ENCODE measurements at regions of chr1 and their contacts with region 1.

Region 1: GRCh38 chr1:93846211-93846991 is 32.6 kb downstream of the DNTTIP2 start:
- DNase-seq: peak; percentile 82 to 85
- H3K4me3 ChIP-seq: peak overlapping the region; percentile 84
- H3K4me3 Mint-ChIP-seq: peak overlapping the region; percentile 81
- H3K27ac Mint-ChIP-seq: peak overlapping the region; percentile 88
- H3K4me1 ChIP-seq: peaks cover 6% of the 10 kb centered on the region
- H3K4me1 Mint-ChIP-seq: no peaks in the 10 kb centered on the region
- H3K27me3 ChIP-seq: no peaks in the 10 kb centered on the region
- H3K27me3 Mint-ChIP-seq: no peaks in the 10 kb centered on the region
- CTCF ChIP-seq: peak in 1 of 2 experiments; percentile 35

Region 2: DNA sequence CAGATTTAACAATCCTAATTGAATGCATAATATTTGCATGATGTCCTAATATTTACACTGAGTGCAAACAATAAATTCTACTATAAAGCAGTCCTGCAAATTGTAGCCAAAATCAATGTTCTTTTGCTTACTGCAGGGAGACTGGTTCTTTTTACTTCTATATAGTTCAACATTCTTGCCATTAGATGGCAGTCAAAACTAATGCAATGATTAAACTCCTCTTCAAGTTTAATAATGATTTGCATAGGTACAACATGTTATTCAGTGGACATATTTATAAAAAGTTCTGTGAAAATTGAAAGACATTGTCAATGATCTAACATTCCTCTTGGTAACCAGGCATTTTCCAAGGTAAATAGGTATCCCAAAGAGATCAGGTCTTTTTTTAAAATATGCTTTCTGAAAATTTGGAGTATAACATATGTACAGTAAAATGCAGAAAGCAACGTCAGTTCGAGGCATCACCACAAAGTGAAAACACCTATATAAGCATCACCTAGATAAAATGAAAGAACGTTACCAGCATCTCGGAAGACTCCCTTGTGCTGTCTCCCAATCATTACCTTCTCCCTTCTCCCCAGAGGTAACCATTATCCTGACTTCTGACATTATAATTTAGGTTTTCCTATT is 408.3 kb before region 1 on chr1:
- CTCF ChIA-PET with region 1: no interaction called
- POLR2A ChIA-PET with region 1: no interaction called
- intact Hi-C with region 1: loop called (anchors 5 kb)
- DNase-seq: peak in 1 of 2 experiments; percentile 14
- H3K4me3 ChIP-seq: no peak overlapping the region
- H3K4me3 Mint-ChIP-seq: no peak overlapping the region
- H3K27ac Mint-ChIP-seq: no peak overlapping the region
- H3K4me1 ChIP-seq: peaks cover 5% of the 10 kb centered on the region; the same call in 1 of the 2 replicates
- H3K4me1 Mint-ChIP-seq: no peaks in the 10 kb centered on the region
- H3K27me3 ChIP-seq: no peaks in the 10 kb centered on the region
- H3K27me3 Mint-ChIP-seq: no peaks in the 10 kb centered on the region
- CTCF ChIP-seq: peak; percentile 24

Region 3: DNA sequence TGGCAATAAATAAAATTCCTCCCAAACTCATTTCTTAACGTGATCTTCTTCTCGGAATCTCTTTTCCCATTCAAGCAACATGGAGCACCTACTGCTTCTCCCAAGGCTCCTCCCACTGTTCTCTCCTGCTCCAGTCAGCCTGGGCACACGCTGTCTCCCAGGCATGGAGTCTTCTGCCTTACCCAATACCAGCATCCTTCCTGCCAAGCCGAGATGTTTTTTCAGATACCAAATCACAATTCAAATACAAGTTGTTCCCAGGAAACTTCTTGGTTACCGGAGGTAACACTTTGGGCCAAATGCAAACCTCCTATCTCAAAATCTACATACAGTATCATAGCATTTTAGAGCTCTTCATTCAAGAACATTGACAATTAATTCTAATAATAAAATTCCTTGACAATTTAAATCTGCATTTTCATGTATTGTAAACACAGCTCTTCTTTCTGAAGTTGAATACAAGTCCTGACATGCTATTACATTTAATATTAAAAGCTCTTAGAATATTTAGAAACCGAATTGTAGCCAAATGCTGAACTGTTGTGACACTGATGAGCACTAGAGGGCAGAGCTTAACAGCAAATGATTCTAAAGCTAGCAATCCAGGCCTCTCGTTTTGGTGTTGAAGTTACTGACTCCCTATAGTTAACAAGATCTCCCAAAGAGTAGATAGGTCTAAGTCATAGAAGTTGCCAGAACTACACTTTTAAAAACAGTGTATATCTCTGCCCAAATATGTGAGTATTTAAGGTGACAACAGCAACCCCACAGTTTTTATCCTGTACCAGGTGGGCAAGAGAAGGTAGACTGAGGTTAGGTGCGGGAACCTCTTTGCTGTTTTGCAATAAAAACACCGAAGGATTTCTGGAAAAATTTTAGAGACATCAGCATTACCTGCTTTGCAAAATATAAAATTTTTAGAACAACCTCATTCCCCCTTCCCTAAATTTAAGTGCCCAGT is 217.0 kb before region 1 on chr1:
- CTCF ChIA-PET with region 1: interaction called, 29 read pairs
- POLR2A ChIA-PET with region 1: no interaction called
- intact Hi-C with region 1: loop called (anchors 1 kb)
- DNase-seq: peak in 1 of 2 experiments; percentile 40
- H3K4me3 ChIP-seq: no peak overlapping the region
- H3K4me3 Mint-ChIP-seq: no peak overlapping the region
- H3K27ac Mint-ChIP-seq: no peak overlapping the region
- H3K4me1 ChIP-seq: no peaks in the 10 kb centered on the region
- H3K4me1 Mint-ChIP-seq: peaks cover 6% of the 10 kb centered on the region
- H3K27me3 ChIP-seq: no peaks in the 10 kb centered on the region
- H3K27me3 Mint-ChIP-seq: no peaks in the 10 kb centered on the region
- CTCF ChIP-seq: peak; percentile 39 to 64

Region 4: GRCh38 chr1:93827633-93828366 is 18.6 kb before region 1 on chr1:
- CTCF ChIA-PET with region 1: interaction called, 4 read pairs
- POLR2A ChIA-PET with region 1: interaction called, 3 read pairs
- intact Hi-C with region 1: loop called (anchors 2 kb)
- DNase-seq: peak; percentile 30 to 41
- H3K4me3 ChIP-seq: no peak overlapping the region
- H3K4me3 Mint-ChIP-seq: peak overlapping the region; percentile 52
- H3K27ac Mint-ChIP-seq: peak overlapping the region; percentile 35
- H3K4me1 ChIP-seq: peaks cover 16% of the 10 kb centered on the region
- H3K4me1 Mint-ChIP-seq: peaks cover 18% of the 10 kb centered on the region
- H3K27me3 ChIP-seq: no peaks in the 10 kb centered on the region
- H3K27me3 Mint-ChIP-seq: no peaks in the 10 kb centered on the region
- CTCF ChIP-seq: no peak

Region 5: GRCh38 chr1:93909146-93910050 is 63.0 kb after region 1 on chr1 and contains the start of gene GCLM:
- CTCF ChIA-PET with region 1: interaction called, 3 read pairs
- POLR2A ChIA-PET with region 1: no interaction called
- intact Hi-C with region 1: loop called (anchors 2 kb)
- DNase-seq: peak; percentile 86 to 91
- H3K4me3 ChIP-seq: peak within 1 kb of the TSS; percentile 40
- H3K4me3 Mint-ChIP-seq: peak within 1 kb of the TSS; percentile 82
- H3K27ac Mint-ChIP-seq: peak within 1 kb of the TSS; percentile 22
- H3K4me1 ChIP-seq: no peaks in the 10 kb centered on the region
- H3K4me1 Mint-ChIP-seq: no peaks in the 10 kb centered on the region
- H3K27me3 ChIP-seq: no peaks in the 10 kb centered on the region
- H3K27me3 Mint-ChIP-seq: peaks cover 9% of the 10 kb centered on the region
- CTCF ChIP-seq: peak; percentile 59 to 76
- total RNA-seq, gene GCLM: 11.7 and 11.8 TPM in 2 replicates

Measured in Caco-2 (cell line).